ENCODE measurements at regions of chr7 and their contacts with region 1.

Region 1: GRCh38 chr7:88344956-88345832 is 38.5 kb upstream of the STEAP4 start:
- DNase-seq: peak; percentile 62
- H3K4me3 Mint-ChIP-seq: no peak overlapping the region
- H3K27ac Mint-ChIP-seq: no peak overlapping the region
- H3K4me1 Mint-ChIP-seq: peaks cover 14% of the 10 kb centered on the region
- H3K27me3 Mint-ChIP-seq: no peaks in the 10 kb centered on the region
- CTCF ChIP-seq: peak; percentile 17

Region 2: DNA sequence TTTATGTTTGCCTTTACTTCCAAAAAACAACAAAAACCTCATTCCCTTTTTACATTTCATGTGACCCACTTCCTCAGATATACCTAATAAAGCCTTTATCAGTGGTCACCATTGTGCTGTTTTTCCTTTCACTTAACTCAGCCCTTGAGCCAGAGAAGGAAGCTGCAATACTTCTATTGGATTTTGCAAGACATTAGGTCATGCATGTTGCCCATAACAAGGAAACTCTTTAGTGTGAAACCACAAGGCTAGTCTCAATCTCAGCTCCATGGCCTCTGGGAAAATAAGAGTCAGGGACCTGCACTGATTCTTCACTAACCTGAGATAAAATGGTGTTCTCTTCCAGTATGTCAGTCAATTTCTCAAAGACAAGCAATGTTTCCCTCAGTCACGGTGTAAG is 66.3 kb before region 1 on chr7:
- CTCF ChIA-PET with region 1: no interaction called
- intact Hi-C with region 1: loop called (anchors 5 kb)
- DNase-seq: peak; percentile 52
- H3K4me3 Mint-ChIP-seq: peak overlapping the region; percentile 36
- H3K27ac Mint-ChIP-seq: peak overlapping the region; percentile 99
- H3K4me1 Mint-ChIP-seq: peaks cover 18% of the 10 kb centered on the region
- H3K27me3 Mint-ChIP-seq: no peaks in the 10 kb centered on the region
- CTCF ChIP-seq: no peak

Region 3: GRCh38 chr7:88357781-88358525 is 12.8 kb after region 1 on chr7:
- CTCF ChIA-PET with region 1: interaction called, 15 read pairs
- intact Hi-C with region 1: no loop called
- DNase-seq: no peak
- H3K4me3 Mint-ChIP-seq: no peak overlapping the region
- H3K27ac Mint-ChIP-seq: no peak overlapping the region
- H3K4me1 Mint-ChIP-seq: no peaks in the 10 kb centered on the region
- H3K27me3 Mint-ChIP-seq: no peaks in the 10 kb centered on the region
- CTCF ChIP-seq: no peak